Naive thymus-derived CD8-positive, alpha-beta T cell (primary cell): ENCODE measurements at regions of chr2 and their contacts with region 1.

Region 1: DNA sequence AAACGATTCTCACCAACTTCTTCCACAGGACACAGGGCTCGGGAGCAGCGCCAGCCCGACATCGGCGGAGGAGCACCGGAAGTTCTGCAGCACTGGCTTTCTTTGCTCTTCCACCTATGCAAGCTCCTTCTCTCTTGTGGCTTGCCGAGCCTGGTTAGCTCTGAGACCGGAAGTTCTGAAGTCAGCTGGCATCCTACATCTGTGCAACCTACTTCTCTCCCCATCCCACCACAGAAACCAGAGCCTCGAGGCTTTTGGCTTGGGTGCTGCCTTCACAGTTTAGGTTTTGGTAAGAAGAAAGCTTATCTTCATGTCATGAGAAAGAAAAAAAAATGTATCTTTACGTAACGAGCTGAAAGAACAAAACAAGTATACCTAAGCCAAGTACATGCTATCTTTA is 111.7 kb downstream of the ANKRD44 start:
- DNase-seq: peak; percentile 63 to 98 (median 93)
- ATAC-seq: peak; percentile 79 to 89
- H3K4me3 Mint-ChIP-seq: peak overlapping the region; percentile 86 to 98 (median 94)
- H3K27ac Mint-ChIP-seq: peak overlapping the region; percentile 96 to 100 (median 98)
- H3K4me1 Mint-ChIP-seq: peaks cover 42 to 96% (median 92%) of the 10 kb centered on the region in 4 donors
- H3K27me3 Mint-ChIP-seq: peaks cover 0 to 2% (median 0%) of the 10 kb centered on the region in 5 donors

Region 2: DNA sequence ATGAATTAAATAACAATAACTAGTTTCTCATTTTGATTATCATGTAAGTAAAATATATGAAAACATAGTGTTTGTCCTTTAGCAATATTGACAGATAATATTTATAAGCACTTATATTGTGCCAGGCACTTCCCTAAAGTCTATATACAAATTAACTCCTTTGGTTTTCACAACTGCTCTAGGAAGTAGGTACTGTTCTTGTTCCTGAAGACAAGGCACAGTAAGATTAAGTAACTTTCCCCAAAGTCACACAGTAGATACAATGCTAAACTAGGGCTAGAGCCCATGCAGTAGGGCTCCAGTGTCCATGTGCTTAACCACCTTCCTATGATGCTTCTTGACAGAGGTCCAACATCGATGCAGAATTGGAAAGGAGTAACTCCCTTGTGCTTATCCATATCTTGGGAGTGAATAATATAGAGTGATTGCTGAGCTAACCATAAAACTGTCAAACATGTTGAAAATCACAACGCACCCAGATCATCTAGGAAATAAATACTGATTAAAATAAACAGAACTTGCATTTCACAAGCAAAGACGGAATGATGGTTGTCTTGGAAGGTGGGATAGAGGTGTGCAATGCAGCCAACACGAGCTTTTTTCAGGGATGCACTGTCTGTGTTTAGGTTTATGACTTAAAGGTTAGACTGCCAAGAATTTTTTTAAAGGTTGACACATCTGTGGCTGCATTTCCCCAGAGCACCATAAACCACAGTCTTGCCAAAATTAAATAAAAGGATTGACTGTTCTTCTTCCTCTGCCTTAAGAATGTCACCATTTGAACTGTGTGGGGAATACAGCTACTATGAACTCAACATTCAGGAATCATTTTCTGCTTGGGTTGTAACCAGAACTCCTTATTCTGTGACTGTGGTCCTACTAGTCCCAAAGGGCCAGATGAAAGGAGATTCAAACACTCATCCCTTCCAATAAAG is 30.9 kb after region 1 on chr2:
- POLR2A ChIA-PET with region 1: interaction called, 259 read pairs
- DNase-seq: no peak
- ATAC-seq: no peak
- H3K4me3 Mint-ChIP-seq: peak overlapping the region in 9 of 10 donors; percentile 6 to 73 (median 51)
- H3K27ac Mint-ChIP-seq: peak overlapping the region; percentile 51 to 100 (median 88)
- H3K4me1 Mint-ChIP-seq: peaks cover 42 to 98% (median 95%) of the 10 kb centered on the region in 4 donors
- H3K27me3 Mint-ChIP-seq: no peaks in the 10 kb centered on the region

Region 3: GRCh38 chr2:197248623-197249022 is 49.7 kb after region 1 on chr2:
- POLR2A ChIA-PET with region 1: interaction called, 40 read pairs
- DNase-seq: peak in 2 of 10 donors; percentile 28 to 43
- ATAC-seq: peak; percentile 61 to 86
- H3K4me3 Mint-ChIP-seq: peak overlapping the region; percentile 4 to 81 (median 66)
- H3K27ac Mint-ChIP-seq: peak overlapping the region; percentile 49 to 100 (median 92)
- H3K4me1 Mint-ChIP-seq: peaks cover 40 to 88% (median 80%) of the 10 kb centered on the region in 4 donors
- H3K27me3 Mint-ChIP-seq: no peaks in the 10 kb centered on the region

Region 4: DNA sequence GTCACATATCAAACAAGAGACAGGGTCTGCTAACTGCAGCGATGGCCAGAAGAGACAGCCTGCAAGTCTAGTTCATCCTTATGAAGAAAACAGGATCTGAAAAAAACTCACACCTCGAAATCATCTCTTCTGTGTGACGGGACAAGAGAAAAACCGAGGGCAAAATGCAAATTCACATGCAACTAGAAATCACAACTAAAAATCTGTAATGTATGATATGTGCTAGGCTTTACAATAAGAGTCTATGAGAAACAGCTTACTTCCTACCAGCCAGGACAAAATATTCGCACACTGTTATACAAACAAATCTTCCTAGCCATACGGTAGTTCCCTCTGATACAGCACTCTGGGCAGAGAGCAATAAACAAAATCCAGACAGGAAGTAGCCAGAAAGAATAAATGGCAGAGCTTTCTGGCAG is 62.9 kb after region 1 on chr2:
- POLR2A ChIA-PET with region 1: interaction called, 40 read pairs
- DNase-seq: no peak
- ATAC-seq: peak; percentile 23 to 42
- H3K4me3 Mint-ChIP-seq: peak overlapping the region; percentile 31 to 76 (median 67)
- H3K27ac Mint-ChIP-seq: peak overlapping the region; percentile 85 to 99 (median 94)
- H3K4me1 Mint-ChIP-seq: peaks cover 40 to 87% (median 84%) of the 10 kb centered on the region in 4 donors
- H3K27me3 Mint-ChIP-seq: no peaks in the 10 kb centered on the region

Region 5: DNA sequence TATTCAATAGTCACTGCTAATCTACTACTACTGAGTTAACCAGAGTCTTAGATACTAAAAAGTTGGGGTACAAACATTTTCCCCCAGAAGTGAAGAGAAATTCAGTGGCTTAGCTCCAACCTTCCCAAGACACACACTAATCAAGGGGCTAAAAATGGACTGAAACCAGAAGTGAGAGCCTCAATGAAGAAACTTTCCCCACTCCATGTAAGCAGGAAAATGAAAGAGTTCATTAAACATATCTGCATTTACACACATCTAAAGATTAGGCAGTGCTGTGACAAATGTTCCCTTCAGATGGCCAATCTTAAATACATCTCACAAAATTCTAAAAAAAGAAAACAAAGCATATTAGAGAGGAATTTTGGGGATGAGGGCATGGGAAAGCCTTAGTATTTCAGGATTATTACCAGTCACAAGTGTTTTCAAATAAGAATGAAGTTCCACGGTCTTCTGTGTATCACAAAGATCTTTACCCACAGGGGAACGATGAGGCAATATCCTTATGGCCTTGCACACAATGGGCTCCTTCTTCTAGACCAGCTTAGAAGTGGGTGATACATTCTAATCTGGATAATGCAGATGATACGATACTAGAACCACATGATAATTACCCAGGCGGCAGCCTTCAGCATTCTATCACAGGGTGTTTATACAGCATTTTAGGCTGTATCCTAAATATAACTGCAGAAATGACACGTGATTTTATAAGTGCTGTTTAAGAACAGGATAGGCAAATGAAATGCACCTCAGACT is 94.5 kb after region 1 on chr2:
- POLR2A ChIA-PET with region 1: interaction called, 19 read pairs
- DNase-seq: no peak
- ATAC-seq: peak; percentile 59 to 62
- H3K4me3 Mint-ChIP-seq: peak overlapping the region; percentile 67 to 94 (median 78)
- H3K27ac Mint-ChIP-seq: peak overlapping the region; percentile 93 to 98 (median 95)
- H3K4me1 Mint-ChIP-seq: peaks cover 54 to 97% (median 86%) of the 10 kb centered on the region in 4 donors
- H3K27me3 Mint-ChIP-seq: no peaks in the 10 kb centered on the region